ENCODE measurements at regions of chr5 and their contacts with region 1.

Region 1: GRCh38 chr5:31161781-31162181 is 31.7 kb upstream of the CDH6 start:
- DNase-seq: peak; percentile 63 to 79
- H3K4me3 ChIP-seq: no peak overlapping the region
- H3K4me3 Mint-ChIP-seq: peak overlapping the region; percentile 67
- H3K27ac Mint-ChIP-seq: peak overlapping the region; percentile 77
- H3K4me1 ChIP-seq: peaks cover 28% of the 10 kb centered on the region
- H3K4me1 Mint-ChIP-seq: peaks cover 33% of the 10 kb centered on the region
- H3K27me3 ChIP-seq: no peaks in the 10 kb centered on the region
- H3K27me3 Mint-ChIP-seq: no peaks in the 10 kb centered on the region
- CTCF ChIP-seq: no peak

Region 2: GRCh38 chr5:31021181-31021624 is 140.6 kb before region 1 on chr5:
- CTCF ChIA-PET with region 1: interaction called, 3 read pairs
- POLR2A ChIA-PET with region 1: no interaction called
- intact Hi-C with region 1: loop called (anchors 1 kb)
- DNase-seq: peak; percentile 49 to 53
- H3K4me3 ChIP-seq: no peak overlapping the region
- H3K4me3 Mint-ChIP-seq: no peak overlapping the region
- H3K27ac Mint-ChIP-seq: peak overlapping the region; percentile 68
- H3K4me1 ChIP-seq: peaks cover 44% of the 10 kb centered on the region
- H3K4me1 Mint-ChIP-seq: peaks cover 10% of the 10 kb centered on the region
- H3K27me3 ChIP-seq: no peaks in the 10 kb centered on the region
- H3K27me3 Mint-ChIP-seq: no peaks in the 10 kb centered on the region
- CTCF ChIP-seq: no peak

Region 3: GRCh38 chr5:31091501-31091900 is 70.3 kb before region 1 on chr5:
- CTCF ChIA-PET with region 1: no interaction called
- POLR2A ChIA-PET with region 1: no interaction called
- intact Hi-C with region 1: loop called (anchors 2 kb)
- DNase-seq: no peak
- H3K4me3 ChIP-seq: no peak overlapping the region
- H3K4me3 Mint-ChIP-seq: no peak overlapping the region
- H3K27ac Mint-ChIP-seq: no peak overlapping the region
- H3K4me1 ChIP-seq: peaks cover 6% of the 10 kb centered on the region; the same call in 1 of the 2 replicates
- H3K4me1 Mint-ChIP-seq: peaks cover 7% of the 10 kb centered on the region
- H3K27me3 ChIP-seq: no peaks in the 10 kb centered on the region
- H3K27me3 Mint-ChIP-seq: no peaks in the 10 kb centered on the region
- CTCF ChIP-seq: no peak

Region 4: GRCh38 chr5:31119938-31120641 is 41.7 kb before region 1 on chr5:
- CTCF ChIA-PET with region 1: no interaction called
- POLR2A ChIA-PET with region 1: no interaction called
- intact Hi-C with region 1: loop called (anchors 1 kb)
- DNase-seq: no peak
- H3K4me3 ChIP-seq: no peak overlapping the region
- H3K4me3 Mint-ChIP-seq: no peak overlapping the region
- H3K27ac Mint-ChIP-seq: no peak overlapping the region
- H3K4me1 ChIP-seq: peaks cover 25% of the 10 kb centered on the region
- H3K4me1 Mint-ChIP-seq: peaks cover 29% of the 10 kb centered on the region
- H3K27me3 ChIP-seq: no peaks in the 10 kb centered on the region
- H3K27me3 Mint-ChIP-seq: no peaks in the 10 kb centered on the region
- CTCF ChIP-seq: no peak

Region 5: GRCh38 chr5:31186672-31187267 is 25.0 kb after region 1 on chr5:
- CTCF ChIA-PET with region 1: interaction called, 3 read pairs
- POLR2A ChIA-PET with region 1: no interaction called
- intact Hi-C with region 1: loop called (anchors 1 kb)
- DNase-seq: peak in 1 of 2 experiments; percentile 51
- H3K4me3 ChIP-seq: no peak overlapping the region
- H3K4me3 Mint-ChIP-seq: no peak overlapping the region
- H3K27ac Mint-ChIP-seq: no peak overlapping the region
- H3K4me1 ChIP-seq: no peaks in the 10 kb centered on the region
- H3K4me1 Mint-ChIP-seq: peaks cover 6% of the 10 kb centered on the region
- H3K27me3 ChIP-seq: no peaks in the 10 kb centered on the region
- H3K27me3 Mint-ChIP-seq: no peaks in the 10 kb centered on the region
- CTCF ChIP-seq: peak; percentile 72 to 80

Region 6: DNA sequence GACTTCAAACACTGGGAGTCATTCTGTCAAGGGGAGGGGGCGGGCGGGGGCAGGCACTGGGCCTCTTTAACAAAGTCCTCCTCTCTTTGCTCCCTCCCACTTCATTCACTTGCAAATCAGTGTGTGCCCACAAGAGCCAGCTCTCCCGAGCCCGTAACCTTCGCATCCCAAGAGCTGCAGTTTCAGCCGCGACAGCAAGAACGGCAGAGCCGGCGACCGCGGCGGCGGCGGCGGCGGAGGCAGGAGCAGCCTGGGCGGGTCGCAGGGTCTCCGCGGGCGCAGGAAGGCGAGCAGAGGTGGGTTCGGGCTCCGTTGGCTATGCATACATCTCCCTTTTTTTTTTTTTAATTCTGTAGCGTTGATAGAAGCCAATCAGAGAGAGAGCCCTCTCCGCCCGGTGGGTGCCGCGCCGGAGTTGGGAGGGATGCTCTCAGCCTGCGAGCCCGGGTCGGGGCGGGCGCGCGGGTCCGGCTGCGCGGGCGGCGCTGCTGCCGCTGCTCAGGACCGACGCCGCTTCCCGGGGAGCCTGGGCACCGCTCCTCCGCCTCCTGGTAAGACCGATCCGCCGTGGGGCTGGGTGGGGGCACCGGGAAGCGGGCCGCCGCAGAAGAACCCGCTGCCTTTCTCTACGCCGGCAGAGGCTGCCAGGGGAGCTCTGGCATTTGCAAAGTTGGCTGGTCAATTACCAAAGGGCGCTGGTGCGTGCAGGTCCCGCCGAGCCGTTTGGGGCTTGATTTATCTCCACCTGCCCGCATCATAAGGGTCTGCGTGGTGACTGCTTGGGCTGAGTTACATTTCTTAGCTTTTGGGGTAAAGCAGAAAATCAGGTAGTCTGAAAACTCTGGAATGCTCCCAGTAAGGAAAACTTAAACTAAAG is 32.0 kb after region 1 on chr5 and contains the start of gene CDH6:
- CTCF ChIA-PET with region 1: no interaction called
- POLR2A ChIA-PET with region 1: no interaction called
- intact Hi-C with region 1: loop called (anchors 1 kb)
- DNase-seq: peak; percentile 70 to 75
- H3K4me3 ChIP-seq: peak within 1 kb of the TSS; percentile 61
- H3K4me3 Mint-ChIP-seq: peak within 1 kb of the TSS; percentile 74
- H3K27ac Mint-ChIP-seq: peak within 1 kb of the TSS; percentile 19
- H3K4me1 ChIP-seq: peaks cover 17% of the 10 kb centered on the region
- H3K4me1 Mint-ChIP-seq: peaks cover 41% of the 10 kb centered on the region
- H3K27me3 ChIP-seq: no peaks in the 10 kb centered on the region
- H3K27me3 Mint-ChIP-seq: no peaks in the 10 kb centered on the region
- CTCF ChIP-seq: no peak
- total RNA-seq, gene CDH6: 16.0 and 18.0 TPM in 2 replicates

Region 7: GRCh38 chr5:31221001-31221400 is 59.2 kb after region 1 on chr5:
- CTCF ChIA-PET with region 1: no interaction called
- POLR2A ChIA-PET with region 1: no interaction called
- intact Hi-C with region 1: loop called (anchors 1 kb)
- DNase-seq: peak; percentile 70 to 81
- H3K4me3 ChIP-seq: no peak overlapping the region
- H3K4me3 Mint-ChIP-seq: peak overlapping the region; percentile 36
- H3K27ac Mint-ChIP-seq: peak overlapping the region; percentile 80
- H3K4me1 ChIP-seq: peaks cover 65% of the 10 kb centered on the region
- H3K4me1 Mint-ChIP-seq: peaks cover 37% of the 10 kb centered on the region
- H3K27me3 ChIP-seq: no peaks in the 10 kb centered on the region
- H3K27me3 Mint-ChIP-seq: no peaks in the 10 kb centered on the region
- CTCF ChIP-seq: no peak

Measured in Caco-2 (cell line).